ENCODE measurements at regions of chr6 and their contacts with region 1.

Region 1: DNA sequence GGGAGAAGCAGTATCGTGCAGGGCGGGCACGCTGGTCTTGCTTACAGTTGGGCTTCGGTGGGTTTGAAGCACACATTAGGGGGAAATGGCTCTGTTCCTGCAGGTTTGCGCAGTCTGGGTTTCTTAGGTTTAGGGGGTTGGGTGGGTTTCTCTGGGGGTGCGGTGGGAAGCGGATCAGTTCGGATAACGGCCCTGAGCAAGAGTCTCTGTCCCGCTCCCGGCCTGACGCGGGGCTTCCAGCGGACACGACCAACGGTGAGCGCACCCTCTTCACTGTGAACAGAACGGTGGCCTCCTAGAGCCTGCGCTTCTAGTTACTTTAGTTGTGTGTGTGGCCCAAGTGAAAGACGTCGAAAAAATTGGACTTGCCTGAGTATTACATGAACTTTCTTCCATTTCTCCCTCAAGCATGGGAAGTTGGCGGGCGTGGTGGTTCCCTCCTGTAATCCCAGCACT is 635 bp upstream of the ELOVL2 start:
- DNase-seq: no peak
- ATAC-seq: no peak
- H3K4me3 ChIP-seq: peak overlapping the region in 1 of 2 donors; percentile 49
- H3K4me3 Mint-ChIP-seq: peak overlapping the region; percentile 62 to 70 (median 68)
- H3K27ac ChIP-seq: no peak overlapping the region
- H3K27ac Mint-ChIP-seq: no peak overlapping the region
- H3K4me1 ChIP-seq: peaks cover 2 to 9% of the 10 kb centered on the region in 2 experiments
- H3K4me1 Mint-ChIP-seq: peaks cover 6 to 13% (median 8%) of the 10 kb centered on the region in 3 donors
- H3K27me3 ChIP-seq: peaks cover 15 to 22% of the 10 kb centered on the region in 2 experiments
- H3K27me3 Mint-ChIP-seq: peaks cover 61 to 62% of the 10 kb centered on the region in 2 donors

Region 2: GRCh38 chr6:10896691-10897090 is 148.0 kb before region 1 on chr6:
- CTCF ChIA-PET with region 1: no interaction called
- POLR2A ChIA-PET with region 1: no interaction called
- DNase-seq: no peak
- ATAC-seq: no peak
- H3K4me3 ChIP-seq: no peak overlapping the region
- H3K4me3 Mint-ChIP-seq: no peak overlapping the region
- H3K27ac ChIP-seq: no peak overlapping the region
- H3K27ac Mint-ChIP-seq: no peak overlapping the region
- H3K4me1 ChIP-seq: peaks cover 0 to under 1% of the 10 kb centered on the region in 2 experiments
- H3K4me1 Mint-ChIP-seq: peaks cover 0 to 1% (median 0%) of the 10 kb centered on the region in 3 donors
- H3K27me3 ChIP-seq: peaks cover 0 to 6% of the 10 kb centered on the region in 2 experiments
- H3K27me3 Mint-ChIP-seq: peaks cover 18 to 22% of the 10 kb centered on the region in 2 donors

Region 3: GRCh38 chr6:10908228-10908627 is 136.5 kb before region 1 on chr6:
- CTCF ChIA-PET with region 1: interaction called in 1 of 2 experiments, 13 read pairs
- POLR2A ChIA-PET with region 1: no interaction called
- DNase-seq: no peak
- ATAC-seq: no peak
- H3K4me3 ChIP-seq: no peak overlapping the region
- H3K4me3 Mint-ChIP-seq: no peak overlapping the region
- H3K27ac ChIP-seq: no peak overlapping the region
- H3K27ac Mint-ChIP-seq: no peak overlapping the region
- H3K4me1 ChIP-seq: no peaks in the 10 kb centered on the region
- H3K4me1 Mint-ChIP-seq: no peaks in the 10 kb centered on the region
- H3K27me3 ChIP-seq: no peaks in the 10 kb centered on the region
- H3K27me3 Mint-ChIP-seq: peaks cover 4 to 7% of the 10 kb centered on the region in 2 donors

Region 4: DNA sequence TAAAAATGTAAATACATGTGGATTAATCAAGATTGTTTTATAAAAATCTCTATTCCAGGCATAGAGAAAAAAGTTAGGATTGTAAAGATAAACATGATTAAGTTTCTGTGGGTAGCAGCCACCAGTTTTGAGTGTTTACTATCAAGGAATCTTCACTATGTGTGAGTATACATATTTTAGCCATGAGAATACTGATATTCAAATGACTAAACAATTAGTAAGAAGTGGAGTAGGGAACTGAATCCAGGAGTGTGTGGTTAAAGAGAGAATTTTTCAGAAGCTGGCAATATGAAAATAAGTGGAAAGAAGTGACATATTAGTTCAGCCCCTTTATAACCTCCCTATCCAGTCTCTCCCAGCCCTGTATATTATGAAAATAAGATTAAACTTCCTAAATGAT is 10.9 kb before region 1 on chr6:
- CTCF ChIA-PET with region 1: no interaction called
- POLR2A ChIA-PET with region 1: no interaction called
- DNase-seq: no peak
- ATAC-seq: no peak
- H3K4me3 ChIP-seq: no peak overlapping the region
- H3K4me3 Mint-ChIP-seq: no peak overlapping the region
- H3K27ac ChIP-seq: no peak overlapping the region
- H3K27ac Mint-ChIP-seq: no peak overlapping the region
- H3K4me1 ChIP-seq: no peaks in the 10 kb centered on the region
- H3K4me1 Mint-ChIP-seq: no peaks in the 10 kb centered on the region
- H3K27me3 ChIP-seq: peaks cover 7 to 9% of the 10 kb centered on the region in 2 experiments
- H3K27me3 Mint-ChIP-seq: peaks cover 43% of the 10 kb centered on the region in 2 donors